SK-N-SH (cell line): ENCODE measurements at regions of chr1 and their contacts with region 1.

Region 1: GRCh38 chr1:151459331-151460046 is at the start of gene POGZ:
- DNase-seq: peak; percentile 94
- H3K4me3 ChIP-seq: peak within 1 kb of the TSS; percentile 71 to 85
- H3K27ac ChIP-seq: peak within 1 kb of the TSS; percentile 92 to 98
- H3K4me1 ChIP-seq: peaks cover 0 to 12% of the 10 kb centered on the region in 2 experiments; a peak in 3 of 4 replicates
- H3K27me3 ChIP-seq: no peaks in the 10 kb centered on the region
- CTCF ChIP-seq: no peak
- EP300 ChIP-seq: 0 out of 4 replicates have a peak, but pooled peaks of 1 of the 2 experiments have one; percentile 18
- RAD21 ChIP-seq: no peak
- polyA plus RNA-seq, gene POGZ: 23.9 and 30.2 TPM in 2 replicates

Region 2: GRCh38 chr1:151372061-151372934 is 87.2 kb before region 1 on chr1 and contains the start of gene SELENBP1:
- CTCF ChIA-PET with region 1: no interaction called
- POLR2A ChIA-PET with region 1: no interaction called
- DNase-seq: no peak
- H3K4me3 ChIP-seq: no peak within 1 kb of the TSS
- H3K27ac ChIP-seq: no peak within 1 kb of the TSS
- H3K4me1 ChIP-seq: peaks cover 0 to 15% of the 10 kb centered on the region in 2 experiments; a peak in 1 of 4 replicates
- H3K27me3 ChIP-seq: no peaks in the 10 kb centered on the region
- CTCF ChIP-seq: no peak
- EP300 ChIP-seq: no peak
- RAD21 ChIP-seq: no peak
- polyA plus RNA-seq, gene SELENBP1: 0.11 and 0.16 TPM in 2 replicates

Region 3: GRCh38 chr1:151472856-151473731 is 13.6 kb after region 1 on chr1:
- CTCF ChIA-PET with region 1: interaction called, 4 read pairs
- POLR2A ChIA-PET with region 1: interaction called, 16 read pairs
- DNase-seq: peak; percentile 82
- H3K4me3 ChIP-seq: peak overlapping the region in 1 of 2 experiments; percentile 33; a peak in 2 of 4 replicates
- H3K27ac ChIP-seq: no peak overlapping the region
- H3K4me1 ChIP-seq: no peaks in the 10 kb centered on the region; a peak in 1 of 4 replicates
- H3K27me3 ChIP-seq: no peaks in the 10 kb centered on the region
- CTCF ChIP-seq: no peak
- EP300 ChIP-seq: no peak
- RAD21 ChIP-seq: no peak

Region 4: DNA sequence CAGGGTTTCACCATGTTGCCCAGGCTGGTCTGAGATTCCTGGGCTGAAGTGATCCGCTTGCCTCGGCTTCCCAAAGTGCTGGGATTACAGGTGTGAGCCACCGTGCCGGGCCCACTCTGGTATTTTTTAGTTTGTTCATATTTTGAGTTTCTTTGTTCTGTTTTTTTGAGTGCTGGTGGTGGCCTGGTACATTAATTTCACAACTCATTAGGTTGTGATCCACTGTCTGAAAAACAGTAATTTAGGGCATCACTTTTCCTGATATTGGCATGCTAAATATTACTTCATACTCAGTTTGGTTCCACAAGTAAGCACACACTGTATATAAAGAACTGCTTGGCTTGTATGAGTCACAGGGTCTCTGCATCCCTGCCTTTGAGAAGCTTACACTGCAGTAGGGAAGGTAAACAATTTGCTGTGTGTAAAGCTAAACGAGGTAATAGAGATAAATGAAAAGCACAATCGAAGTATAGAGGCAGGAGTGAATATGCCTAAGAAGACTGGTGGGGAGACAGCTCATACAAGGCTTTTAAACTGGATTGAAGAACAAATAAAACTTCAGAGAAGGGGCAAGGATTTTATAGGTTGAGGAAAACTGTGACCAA is 160.1 kb after region 1 on chr1:
- CTCF ChIA-PET with region 1: no interaction called
- POLR2A ChIA-PET with region 1: no interaction called
- DNase-seq: no peak
- H3K4me3 ChIP-seq: no peak overlapping the region
- H3K27ac ChIP-seq: peak overlapping the region; percentile 0 to 22; a peak in 3 of 4 replicates
- H3K4me1 ChIP-seq: peaks cover 13 to 23% of the 10 kb centered on the region in 2 experiments
- H3K27me3 ChIP-seq: no peaks in the 10 kb centered on the region
- CTCF ChIP-seq: no peak
- EP300 ChIP-seq: no peak
- RAD21 ChIP-seq: no peak